AG04449 (cell line): ENCODE measurements at regions of chr15 and their contacts with region 1.

Region 1: GRCh38 chr15:92521624-92522008 is 127.9 kb downstream of the ST8SIA2 start:
- DNase-seq: peak; percentile 28
- H3K4me3 ChIP-seq: no peak overlapping the region
- CTCF ChIP-seq: peak; percentile 64

Region 2: GRCh38 chr15:92541291-92542200 is 19.9 kb after region 1 on chr15:
- CTCF ChIA-PET with region 1: no interaction called
- POLR2A ChIA-PET with region 1: no interaction called
- DNase-seq: no peak
- H3K4me3 ChIP-seq: no peak overlapping the region
- CTCF ChIP-seq: no peak

Region 3: GRCh38 chr15:92683232-92683834 is 161.7 kb after region 1 on chr15:
- CTCF ChIA-PET with region 1: interaction called, 11 read pairs
- POLR2A ChIA-PET with region 1: no interaction called
- DNase-seq: no peak
- H3K4me3 ChIP-seq: no peak overlapping the region
- CTCF ChIP-seq: peak; percentile 33

Region 4: DNA sequence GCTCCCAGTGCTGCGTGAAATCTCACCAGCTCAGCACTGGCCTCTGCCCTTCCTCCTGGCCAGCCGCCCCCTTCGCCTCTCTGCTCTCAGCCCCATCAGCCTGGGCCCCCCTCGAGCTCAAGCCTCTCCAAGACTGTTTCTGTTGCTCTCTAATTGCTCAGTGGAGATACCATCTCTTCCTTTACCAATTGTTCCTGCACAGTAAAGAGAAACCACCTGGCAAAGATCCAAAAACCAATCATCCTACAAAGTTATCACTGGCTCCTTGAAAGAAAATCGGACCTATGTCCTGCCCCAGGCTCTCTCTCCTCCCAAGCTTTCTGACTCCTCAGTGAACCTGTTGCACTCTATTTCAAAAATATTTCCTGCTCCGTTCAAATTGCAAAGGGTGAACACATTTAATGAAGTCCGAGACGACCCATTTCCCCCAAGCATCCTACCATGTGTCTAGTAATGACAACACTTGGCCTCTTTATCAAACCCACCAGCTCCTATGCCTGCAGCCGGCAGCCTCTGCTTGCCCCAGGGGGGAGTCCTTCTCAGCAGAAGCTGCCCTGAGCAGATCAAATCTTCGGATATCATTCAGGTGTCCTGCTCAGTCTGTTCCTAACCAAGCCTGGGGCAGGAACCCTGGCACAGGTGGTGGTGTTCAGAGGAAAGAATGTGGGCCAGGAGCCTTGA is 187.6 kb after region 1 on chr15:
- CTCF ChIA-PET with region 1: interaction called, 95 read pairs
- POLR2A ChIA-PET with region 1: no interaction called
- DNase-seq: no peak
- H3K4me3 ChIP-seq: no peak overlapping the region
- CTCF ChIP-seq: no peak